ENCODE measurements at regions of chr3 and their contacts with region 1.

Region 1: DNA sequence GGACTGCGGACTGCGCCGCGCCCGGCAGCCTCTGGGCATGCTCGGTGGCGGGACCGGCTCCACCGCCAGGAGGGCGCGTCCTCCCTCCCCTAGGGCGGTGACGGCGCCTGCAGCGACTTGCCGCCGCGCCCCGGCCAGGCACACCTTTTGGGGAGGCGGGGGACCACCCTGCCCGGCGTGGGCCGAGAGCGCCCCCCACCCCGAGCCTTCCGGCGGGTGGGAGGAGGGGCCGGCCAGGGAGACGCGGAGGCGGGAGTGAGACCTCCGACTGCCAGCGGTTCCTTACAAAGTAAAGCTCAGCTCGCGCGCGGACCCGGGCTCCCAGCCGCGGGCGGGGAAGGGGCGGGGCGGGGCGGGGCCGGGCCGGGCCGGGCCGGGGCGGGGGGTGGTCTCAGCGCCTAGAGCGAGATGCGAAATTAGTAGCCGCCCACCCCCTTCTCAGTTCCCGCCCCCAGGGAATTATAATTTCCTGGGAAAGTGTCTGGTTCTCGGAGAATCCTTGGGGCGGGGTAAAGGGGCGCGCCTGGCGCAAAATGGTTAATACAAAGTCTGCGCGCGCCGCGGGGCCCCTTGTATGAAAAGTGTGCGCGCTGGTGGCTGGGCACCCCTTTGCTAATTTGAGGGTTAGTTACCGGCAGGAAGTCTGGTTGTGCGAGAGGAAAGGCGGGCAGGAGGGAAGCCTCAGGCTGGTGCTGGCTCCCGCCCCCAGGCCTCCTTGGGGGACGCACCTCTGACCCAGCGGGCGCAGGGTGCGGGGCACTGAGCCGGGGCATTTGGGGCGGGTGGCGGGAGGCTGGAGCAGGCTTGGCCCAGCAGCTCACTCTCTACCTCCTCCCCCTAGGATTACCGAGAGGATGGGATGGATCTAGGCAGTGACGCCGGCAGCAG is 224.8 kb upstream of the IL12A start:
- DNase-seq: peak; percentile 45
- ATAC-seq: peak; percentile 75
- H3K4me3 Mint-ChIP-seq: peak overlapping the region; percentile 90
- H3K27ac Mint-ChIP-seq: no peak overlapping the region
- H3K4me1 Mint-ChIP-seq: peaks cover 21% of the 10 kb centered on the region
- H3K27me3 Mint-ChIP-seq: peaks cover 32% of the 10 kb centered on the region
- CTCF ChIP-seq: no peak

Region 2: GRCh38 chr3:159721324-159721723 is 42.5 kb before region 1 on chr3:
- CTCF ChIA-PET with region 1: no interaction called
- POLR2A ChIA-PET with region 1: no interaction called
- intact Hi-C with region 1: no loop called
- DNase-seq: no peak
- ATAC-seq: no peak
- H3K4me3 Mint-ChIP-seq: no peak overlapping the region
- H3K27ac Mint-ChIP-seq: no peak overlapping the region
- H3K4me1 Mint-ChIP-seq: no peaks in the 10 kb centered on the region
- H3K27me3 Mint-ChIP-seq: peaks cover 3% of the 10 kb centered on the region
- CTCF ChIP-seq: no peak

Region 3: DNA sequence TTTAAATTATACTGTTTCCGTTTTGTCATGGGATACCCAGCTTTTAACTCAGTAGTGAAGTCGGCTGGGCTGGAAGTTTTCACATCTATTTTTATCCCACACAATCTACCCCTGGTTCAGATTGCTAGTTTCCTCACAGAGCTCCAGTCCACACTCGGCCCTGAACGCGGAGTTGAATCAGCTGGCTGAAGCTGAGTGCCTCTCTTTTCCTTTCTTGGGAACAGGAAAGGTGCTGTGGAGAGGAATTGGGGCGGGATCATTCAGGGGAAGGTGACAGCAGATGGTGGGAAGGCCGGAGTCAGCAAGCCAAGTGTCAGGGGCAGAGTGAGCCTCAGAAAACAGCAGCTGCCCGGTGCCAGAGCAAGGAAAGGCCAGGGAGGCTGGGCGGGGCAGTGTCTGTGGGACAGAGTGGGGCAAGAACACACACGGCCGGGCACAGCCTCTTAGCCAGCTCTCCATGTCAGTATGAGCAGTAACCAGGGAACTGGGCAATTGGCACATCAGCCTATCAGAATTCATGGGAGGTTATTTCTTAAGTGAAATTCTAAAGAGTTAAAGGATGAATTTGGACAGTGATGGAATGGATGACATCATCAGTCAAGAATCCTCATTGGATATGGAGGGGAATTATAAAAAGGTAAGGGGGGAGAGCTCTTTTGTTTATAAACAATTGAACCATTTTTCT is 89.1 kb after region 1 on chr3:
- CTCF ChIA-PET with region 1: no interaction called
- POLR2A ChIA-PET with region 1: no interaction called
- intact Hi-C with region 1: no loop called
- DNase-seq: no peak
- ATAC-seq: no peak
- H3K4me3 Mint-ChIP-seq: no peak overlapping the region
- H3K27ac Mint-ChIP-seq: no peak overlapping the region
- H3K4me1 Mint-ChIP-seq: peaks cover 11% of the 10 kb centered on the region
- H3K27me3 Mint-ChIP-seq: peaks cover 10% of the 10 kb centered on the region
- CTCF ChIP-seq: no peak

Region 4: DNA sequence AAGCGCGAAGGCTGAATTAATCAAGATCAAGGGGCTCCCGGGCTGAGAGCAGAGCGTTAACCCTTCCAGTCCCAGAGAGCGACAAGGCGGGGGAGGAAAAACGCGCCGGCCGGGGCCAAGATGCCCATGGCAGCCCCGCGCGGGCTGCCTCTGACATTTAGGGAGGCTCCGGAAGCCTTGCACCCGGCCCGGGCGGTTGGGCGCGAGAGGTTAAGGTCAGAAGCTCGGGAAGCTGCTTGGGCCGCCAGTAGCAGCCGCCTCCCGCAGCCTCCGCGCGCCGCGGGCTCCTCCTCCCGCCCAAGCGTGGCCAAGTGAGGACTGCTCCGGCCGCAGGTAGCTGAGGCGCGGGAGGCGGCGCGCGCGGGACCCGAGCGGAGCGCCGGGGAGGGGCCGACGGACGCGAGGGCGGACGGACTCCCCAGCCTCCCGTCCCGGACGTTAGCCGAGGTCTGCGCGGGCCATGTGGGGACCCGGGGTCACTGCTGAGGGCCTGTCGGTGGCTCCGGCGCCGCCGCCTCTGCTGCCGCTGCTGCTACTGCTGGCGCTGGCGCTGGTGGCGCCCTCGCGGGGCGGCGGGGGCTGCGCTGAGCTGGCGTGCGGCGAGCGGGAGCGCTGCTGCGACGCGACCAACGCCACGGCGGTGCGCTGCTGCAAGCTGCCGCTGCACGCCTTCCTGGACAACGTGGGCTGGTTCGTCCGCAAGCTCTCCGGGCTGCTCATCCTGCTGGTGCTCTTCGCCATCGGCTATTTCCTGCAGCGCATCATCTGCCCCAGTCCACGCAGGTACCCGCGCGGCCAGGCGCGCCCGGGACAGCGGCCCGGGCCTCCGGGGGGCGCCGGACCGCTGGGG is 461.6 kb after region 1 on chr3 and contains the start of gene C3orf80:
- CTCF ChIA-PET with region 1: no interaction called
- POLR2A ChIA-PET with region 1: no interaction called
- intact Hi-C with region 1: loop called (anchors 5 kb)
- DNase-seq: peak; percentile 41
- ATAC-seq: peak; percentile 78
- H3K4me3 Mint-ChIP-seq: peak within 1 kb of the TSS; percentile 71
- H3K27ac Mint-ChIP-seq: no peak within 1 kb of the TSS
- H3K4me1 Mint-ChIP-seq: peaks cover 21% of the 10 kb centered on the region
- H3K27me3 Mint-ChIP-seq: peaks cover 37% of the 10 kb centered on the region
- CTCF ChIP-seq: no peak
- total RNA-seq, gene C3orf80: not detected in 2 replicates